H1 (cell line): ENCODE measurements at regions of chr19 and their contacts with region 1.

Region 1: GRCh38 chr19:54352041-54352440 is 12.7 kb downstream of the LAIR1 start:
- DNase-seq: no peak
- H3K4me3 ChIP-seq: no peak overlapping the region
- H3K27ac ChIP-seq: no peak overlapping the region
- H3K4me1 ChIP-seq: no peaks in the 10 kb centered on the region
- H3K27me3 ChIP-seq: no peaks in the 10 kb centered on the region
- CTCF ChIP-seq: no peak
- EP300 ChIP-seq: no peak
- POLR2A ChIP-seq: no peak
- RAD21 ChIP-seq: no peak

Region 2: DNA sequence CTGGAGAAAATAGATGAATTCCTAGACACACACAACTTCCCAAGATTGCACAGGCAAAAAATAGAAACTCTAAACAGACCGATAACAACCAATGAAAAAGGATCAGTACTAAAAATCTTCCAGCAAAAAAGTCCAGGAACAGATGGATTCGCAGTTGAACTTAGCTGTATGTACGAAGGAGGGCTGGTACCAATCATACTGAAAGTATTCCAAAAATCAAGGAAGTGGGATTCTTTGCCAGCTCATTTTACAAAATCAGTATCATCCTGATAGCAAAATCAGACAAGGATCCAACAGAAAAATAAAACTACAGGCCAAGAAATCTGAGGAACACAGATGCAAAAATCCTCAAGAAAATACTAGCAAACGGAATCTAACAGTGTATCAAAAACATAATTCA is 64.6 kb before region 1 on chr19:
- CTCF ChIA-PET with region 1: no interaction called
- POLR2A ChIA-PET with region 1: no interaction called
- DNase-seq: no peak
- H3K4me3 ChIP-seq: no peak overlapping the region
- H3K27ac ChIP-seq: no peak overlapping the region
- H3K4me1 ChIP-seq: no peaks in the 10 kb centered on the region; a peak in 1 of 7 replicates
- H3K27me3 ChIP-seq: no peaks in the 10 kb centered on the region
- CTCF ChIP-seq: no peak
- EP300 ChIP-seq: no peak
- POLR2A ChIP-seq: no peak
- RAD21 ChIP-seq: no peak

Region 3: DNA sequence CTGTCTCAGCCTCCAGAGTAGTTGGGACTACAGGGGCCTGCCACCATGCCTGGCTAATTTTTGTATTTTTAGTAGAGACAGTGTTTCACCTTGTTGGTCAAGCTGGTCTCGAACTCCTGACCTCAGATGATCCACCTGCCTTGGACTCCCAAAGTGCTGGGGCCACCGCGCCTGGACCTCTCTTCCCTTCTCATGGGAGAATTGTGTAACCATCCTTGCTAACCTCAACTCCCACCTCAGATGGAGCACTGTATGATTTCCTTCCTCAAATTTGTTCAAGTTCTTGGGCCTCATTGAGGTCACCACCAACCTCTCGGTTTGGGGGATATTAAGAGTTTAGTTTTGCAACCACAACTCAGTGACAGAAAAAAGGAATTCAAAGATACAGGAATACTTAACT is 49.8 kb before region 1 on chr19:
- CTCF ChIA-PET with region 1: no interaction called
- POLR2A ChIA-PET with region 1: no interaction called
- DNase-seq: no peak
- H3K4me3 ChIP-seq: no peak overlapping the region
- H3K27ac ChIP-seq: no peak overlapping the region
- H3K4me1 ChIP-seq: no peaks in the 10 kb centered on the region
- H3K27me3 ChIP-seq: 0 out of 7 replicates have a peak, but pooled peaks cover 0 to 8% (median 0%) of the 10 kb centered on the region in 4 experiments
- CTCF ChIP-seq: no peak
- EP300 ChIP-seq: no peak
- POLR2A ChIP-seq: no peak
- RAD21 ChIP-seq: no peak

Region 4: DNA sequence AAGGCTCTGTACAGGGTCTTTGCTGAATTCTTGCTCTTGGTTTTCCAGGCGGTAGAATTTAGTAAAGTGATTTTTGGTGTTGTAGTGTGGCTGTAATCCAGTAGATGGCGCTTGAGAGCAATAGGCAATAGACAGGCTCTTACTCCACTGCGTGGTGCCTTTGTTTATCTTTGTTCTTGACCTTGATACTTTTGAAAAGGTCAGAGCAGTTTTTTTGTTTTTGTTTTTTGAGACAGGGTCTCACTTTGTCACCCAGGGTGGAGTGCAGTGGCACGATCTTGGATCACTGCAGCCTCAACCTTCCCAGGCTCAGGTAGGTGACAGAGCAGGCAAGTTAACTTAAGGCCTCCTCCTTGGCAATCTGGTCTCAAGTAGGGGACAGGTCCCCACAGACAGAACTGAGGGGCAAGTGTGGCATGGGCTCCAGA is 26.8 kb before region 1 on chr19:
- CTCF ChIA-PET with region 1: interaction called, 40 read pairs
- POLR2A ChIA-PET with region 1: no interaction called
- DNase-seq: peak in 1 of 2 experiments; percentile 65
- H3K4me3 ChIP-seq: no peak overlapping the region
- H3K27ac ChIP-seq: no peak overlapping the region
- H3K4me1 ChIP-seq: peaks cover 0 to 7% (median 5%) of the 10 kb centered on the region in 4 experiments; a peak in 6 of 7 replicates
- H3K27me3 ChIP-seq: peaks cover 0 to 2% (median 0%) of the 10 kb centered on the region in 4 experiments; a peak in 1 of 7 replicates
- CTCF ChIP-seq: peak in 2 of 3 experiments; percentile 74 to 87; a peak in 3 of 4 replicates
- EP300 ChIP-seq: no peak
- POLR2A ChIP-seq: no peak
- RAD21 ChIP-seq: peak; percentile 58

Region 5: GRCh38 chr19:54482889-54483288 is 130.8 kb after region 1 on chr19:
- CTCF ChIA-PET with region 1: no interaction called
- POLR2A ChIA-PET with region 1: no interaction called
- DNase-seq: no peak
- H3K4me3 ChIP-seq: no peak overlapping the region
- H3K27ac ChIP-seq: no peak overlapping the region
- H3K4me1 ChIP-seq: no peaks in the 10 kb centered on the region
- H3K27me3 ChIP-seq: no peaks in the 10 kb centered on the region
- CTCF ChIP-seq: no peak
- EP300 ChIP-seq: no peak
- POLR2A ChIP-seq: no peak
- RAD21 ChIP-seq: no peak